Posterior vena cava (tissue), 2 donors: ENCODE measurements at regions of chr18 and their contacts with region 1.

Region 1: DNA sequence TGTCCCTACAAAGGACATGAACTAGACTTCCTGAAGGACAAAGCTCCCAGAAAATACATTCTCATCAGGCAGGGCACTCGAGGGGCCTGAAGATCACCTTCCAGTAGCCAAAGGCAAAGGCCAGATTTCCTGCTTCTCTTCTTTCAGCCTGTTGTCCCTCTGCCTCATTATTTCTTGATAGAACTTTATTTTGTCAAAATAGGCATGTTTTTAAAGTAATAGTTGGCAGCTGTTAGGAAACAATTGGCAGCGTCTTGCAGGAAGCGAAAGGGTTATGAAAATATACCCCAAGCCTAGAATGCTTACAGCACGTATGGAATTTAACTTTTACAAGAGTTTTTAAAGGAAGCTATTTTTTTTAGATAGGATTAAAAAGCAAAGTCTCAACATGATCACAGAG is 74.9 kb downstream of the LINC00305 start:
- DNase-seq: no peak

Region 2: DNA sequence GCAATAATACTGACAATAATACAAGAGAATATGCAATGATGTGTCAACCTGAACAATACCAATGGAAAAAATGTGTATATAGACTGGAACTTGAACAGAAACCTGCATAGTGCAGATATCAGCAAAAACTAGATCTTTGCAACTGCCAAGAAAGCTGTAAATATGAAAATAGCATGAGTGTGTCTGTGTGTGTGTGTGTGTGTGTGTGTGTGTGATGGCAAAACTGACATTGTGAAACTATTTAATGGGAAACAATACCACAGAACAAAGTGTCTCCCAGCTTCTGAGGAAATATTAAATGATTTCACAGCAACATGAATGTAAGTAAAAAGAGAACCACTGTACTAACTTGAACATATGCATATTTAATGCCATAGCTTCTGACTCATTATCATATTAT is 633.1 kb after region 1 on chr18:
- intact Hi-C with region 1: loop called in 1 of 2 experiments (anchors 10 kb)
- DNase-seq: no peak